ENCODE measurements at regions of chr19 and their contacts with region 1.

Region 1: GRCh38 chr19:21698215-21698614 is 69.2 kb downstream of the ZNF100 start:
- DNase-seq: peak; percentile 47
- H3K4me3 ChIP-seq: no peak overlapping the region
- H3K27ac ChIP-seq: no peak overlapping the region
- H3K4me1 ChIP-seq: peaks cover 0 to 7% of the 10 kb centered on the region in 2 experiments; a peak in 1 of 4 replicates
- H3K27me3 ChIP-seq: no peaks in the 10 kb centered on the region
- CTCF ChIP-seq: peak; percentile 52
- EP300 ChIP-seq: no peak
- RAD21 ChIP-seq: peak; percentile 81

Region 2: DNA sequence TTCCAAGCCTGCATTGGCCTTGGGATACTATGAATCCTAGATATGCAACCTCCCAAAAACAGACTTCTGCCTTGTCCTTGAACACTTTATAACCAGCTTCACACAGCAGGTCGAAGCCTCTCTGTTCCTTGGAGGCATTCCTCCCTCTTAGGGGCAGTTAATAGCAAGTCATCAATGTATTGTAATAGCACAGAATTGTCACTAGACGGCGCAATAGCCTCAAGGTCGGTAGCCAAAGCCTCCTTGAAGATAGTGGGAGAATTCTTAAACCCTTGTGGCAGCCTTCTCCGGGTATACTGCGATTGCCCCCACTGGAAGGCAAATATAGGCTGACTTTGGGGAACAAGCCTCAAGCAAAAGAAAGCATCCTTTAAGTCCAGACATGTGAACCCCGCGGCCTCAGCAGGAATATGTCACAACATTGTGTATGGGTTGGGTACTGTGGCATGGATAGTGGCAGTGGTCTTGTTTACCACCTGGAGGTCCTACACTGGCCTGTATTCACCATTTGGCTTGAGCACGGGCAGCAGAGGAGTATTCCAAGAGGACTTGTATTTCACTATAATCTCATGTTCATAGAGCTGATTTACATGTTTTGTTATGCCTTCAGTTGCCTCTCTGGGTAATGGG is 495.2 kb before region 1 on chr19:
- CTCF ChIA-PET with region 1: interaction called, 10 read pairs
- POLR2A ChIA-PET with region 1: no interaction called
- DNase-seq: peak; percentile 49
- H3K4me3 ChIP-seq: no peak overlapping the region
- H3K27ac ChIP-seq: no peak overlapping the region
- H3K4me1 ChIP-seq: no peaks in the 10 kb centered on the region; a peak in 1 of 4 replicates
- H3K27me3 ChIP-seq: no peaks in the 10 kb centered on the region
- CTCF ChIP-seq: peak; percentile 64
- EP300 ChIP-seq: no peak
- RAD21 ChIP-seq: peak; percentile 84

Region 3: GRCh38 chr19:21505459-21506451 is 192.5 kb before region 1 on chr19 and contains the start of gene ZNF429:
- CTCF ChIA-PET with region 1: interaction called, 10 read pairs
- POLR2A ChIA-PET with region 1: no interaction called
- DNase-seq: peak; percentile 90
- H3K4me3 ChIP-seq: peak within 1 kb of the TSS; percentile 71 to 86
- H3K27ac ChIP-seq: peak within 1 kb of the TSS; percentile 78 to 97
- H3K4me1 ChIP-seq: no peaks in the 10 kb centered on the region; a peak in 2 of 4 replicates
- H3K27me3 ChIP-seq: no peaks in the 10 kb centered on the region
- CTCF ChIP-seq: peak; percentile 11; the same call in 1 of the 2 replicates
- EP300 ChIP-seq: peak in 1 of 2 experiments; percentile 79; a peak in 2 of 4 replicates
- RAD21 ChIP-seq: peak; percentile 2; the same call in 1 of the 2 replicates
- polyA plus RNA-seq, gene ZNF429: 5.6 and 8.3 TPM in 2 replicates

Region 4: DNA sequence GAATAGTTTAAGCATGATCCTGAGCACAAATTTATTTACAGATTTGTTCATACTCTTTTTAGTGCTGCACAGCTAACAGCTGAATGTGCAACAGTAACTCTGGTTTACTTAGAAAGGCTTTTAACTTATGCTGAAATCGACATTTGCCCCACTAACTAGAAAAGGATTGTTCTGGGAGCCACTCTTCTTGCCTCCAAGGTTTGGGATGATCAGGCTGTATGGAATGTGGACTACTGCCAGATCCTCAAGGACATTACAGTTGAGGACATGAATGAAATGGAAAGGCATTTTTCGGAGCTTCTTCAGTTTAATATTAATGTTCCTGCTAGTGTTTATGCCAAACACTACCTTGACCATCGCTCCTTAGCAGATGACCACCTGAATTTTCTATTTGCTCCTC is 53.2 kb after region 1 on chr19:
- CTCF ChIA-PET with region 1: no interaction called
- POLR2A ChIA-PET with region 1: no interaction called
- DNase-seq: no peak
- H3K4me3 ChIP-seq: no peak overlapping the region
- H3K27ac ChIP-seq: no peak overlapping the region
- H3K4me1 ChIP-seq: peaks cover 0 to 3% of the 10 kb centered on the region in 2 experiments; a peak in 2 of 4 replicates
- H3K27me3 ChIP-seq: no peaks in the 10 kb centered on the region
- CTCF ChIP-seq: no peak
- EP300 ChIP-seq: no peak
- RAD21 ChIP-seq: no peak

Region 5: DNA sequence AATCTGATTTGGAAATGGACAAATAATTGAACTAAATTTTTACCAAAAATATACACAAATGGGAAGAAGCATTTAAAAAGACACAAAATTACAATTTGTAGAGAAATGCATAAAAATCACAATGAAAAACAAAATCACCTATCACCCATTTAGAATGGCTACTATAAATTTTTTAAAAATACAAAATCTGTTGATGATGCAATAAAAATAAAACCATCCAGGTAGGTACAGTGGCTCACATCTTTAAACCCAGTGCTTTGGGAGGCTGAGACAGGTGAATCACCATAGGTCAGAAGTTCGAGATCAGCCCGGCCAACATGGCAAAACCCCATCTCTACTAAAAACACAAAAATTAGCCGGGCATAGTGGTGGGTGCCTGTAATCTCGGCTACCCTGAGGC is 114.2 kb after region 1 on chr19:
- CTCF ChIA-PET with region 1: no interaction called
- POLR2A ChIA-PET with region 1: no interaction called
- DNase-seq: no peak
- H3K4me3 ChIP-seq: no peak overlapping the region
- H3K27ac ChIP-seq: no peak overlapping the region
- H3K4me1 ChIP-seq: no peaks in the 10 kb centered on the region
- H3K27me3 ChIP-seq: no peaks in the 10 kb centered on the region
- CTCF ChIP-seq: no peak
- EP300 ChIP-seq: no peak
- RAD21 ChIP-seq: no peak

Measured in SK-N-SH (cell line).